Endothelial cell of umbilical vein (primary cell): ENCODE measurements at regions of chr12 and their contacts with region 1.

Region 1: GRCh38 chr12:94571556-94571955 is 78.8 kb downstream of the TMCC3 start:
- DNase-seq: peak; percentile 94
- H3K4me3 ChIP-seq: no peak overlapping the region
- H3K27ac ChIP-seq: peak overlapping the region; percentile 82
- H3K4me1 ChIP-seq: peaks cover 29% of the 10 kb centered on the region
- H3K27me3 ChIP-seq: no peaks in the 10 kb centered on the region
- CTCF ChIP-seq: no peak
- POLR2A ChIP-seq: no peak

Region 2: DNA sequence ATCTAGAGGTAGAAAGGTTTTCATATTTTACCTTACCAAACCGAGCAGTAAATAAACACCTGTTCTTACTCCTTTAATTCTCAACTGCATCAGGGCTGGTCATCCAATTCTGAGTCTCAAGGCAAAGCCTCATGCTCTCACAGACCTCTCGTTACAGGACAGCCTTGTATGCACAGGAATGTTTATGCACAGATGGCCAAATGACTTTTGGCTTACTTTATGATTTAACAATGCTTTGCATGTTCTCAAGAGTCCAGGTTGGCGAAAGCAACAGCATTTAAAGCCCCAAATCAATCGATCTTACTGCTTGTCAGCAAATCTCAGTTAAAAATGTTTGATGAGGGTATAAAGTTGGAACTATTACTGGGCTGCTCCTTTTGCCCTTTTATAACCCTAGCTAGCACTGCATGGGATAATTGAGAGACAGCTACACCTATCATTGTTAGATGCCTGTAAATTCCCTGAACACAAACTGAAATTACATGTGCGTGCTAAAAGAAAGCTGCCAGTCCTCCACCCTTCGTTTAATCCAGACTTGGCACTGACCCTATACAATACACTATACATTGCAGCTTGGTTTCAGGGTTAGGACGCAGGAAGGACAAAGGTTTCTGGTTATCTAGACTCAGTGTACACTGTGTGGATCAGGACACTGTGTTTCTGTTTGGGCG is 15.2 kb after region 1 on chr12:
- CTCF ChIA-PET with region 1: interaction called, 5 read pairs
- POLR2A ChIA-PET with region 1: no interaction called
- dilution Hi-C with region 1: no loop called
- intact Hi-C with region 1: loop called (anchors 1 kb)
- DNase-seq: peak; percentile 95
- H3K4me3 ChIP-seq: no peak overlapping the region
- H3K27ac ChIP-seq: peak overlapping the region; percentile 57
- H3K4me1 ChIP-seq: peaks cover 54% of the 10 kb centered on the region
- H3K27me3 ChIP-seq: no peaks in the 10 kb centered on the region
- CTCF ChIP-seq: no peak
- POLR2A ChIP-seq: no peak

Region 3: GRCh38 chr12:94621664-94622359 is 50.3 kb after region 1 on chr12:
- CTCF ChIA-PET with region 1: interaction called, 3 read pairs
- POLR2A ChIA-PET with region 1: no interaction called
- dilution Hi-C with region 1: no loop called
- intact Hi-C with region 1: loop called (anchors 2 kb)
- DNase-seq: peak; percentile 81
- H3K4me3 ChIP-seq: peak overlapping the region in 2 of 3 experiments; percentile 67 to 72
- H3K27ac ChIP-seq: peak overlapping the region; percentile 97
- H3K4me1 ChIP-seq: peaks cover 41% of the 10 kb centered on the region
- H3K27me3 ChIP-seq: no peaks in the 10 kb centered on the region
- CTCF ChIP-seq: no peak
- POLR2A ChIP-seq: no peak

Region 4: DNA sequence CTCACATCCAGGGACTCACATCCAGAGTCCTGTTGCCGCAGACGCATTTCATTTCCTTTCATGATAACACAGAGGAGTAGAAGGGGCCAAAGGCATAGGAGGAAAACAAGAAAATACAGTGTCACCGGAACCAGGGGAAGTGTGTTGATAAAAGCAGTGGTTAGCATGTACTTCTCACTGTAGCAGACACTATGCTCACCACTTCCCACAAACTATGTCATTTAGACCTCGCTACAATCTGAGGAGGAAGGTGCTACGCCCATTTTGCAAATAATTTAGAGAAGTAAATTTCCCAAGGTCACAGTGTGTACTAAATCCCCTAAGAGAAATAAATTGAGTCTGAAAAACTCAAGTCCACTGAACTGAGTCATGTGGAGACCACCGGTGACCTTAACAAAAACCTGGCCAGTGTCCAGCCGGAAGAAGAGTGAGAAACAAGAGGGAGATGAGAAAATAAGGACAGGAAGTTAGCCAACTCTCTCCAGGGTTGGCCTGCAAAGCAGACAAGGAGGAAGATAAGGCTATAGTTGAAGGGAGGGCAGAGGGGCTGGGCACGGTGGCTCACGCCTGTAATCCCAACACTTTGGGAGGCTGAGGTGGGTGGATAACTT is 104.6 kb after region 1 on chr12:
- CTCF ChIA-PET with region 1: no interaction called
- POLR2A ChIA-PET with region 1: interaction called, 3 read pairs
- dilution Hi-C with region 1: no loop called
- intact Hi-C with region 1: loop called (anchors 1 kb)
- DNase-seq: peak; percentile 84
- H3K4me3 ChIP-seq: no peak overlapping the region
- H3K27ac ChIP-seq: peak overlapping the region; percentile 66
- H3K4me1 ChIP-seq: peaks cover 40% of the 10 kb centered on the region
- H3K27me3 ChIP-seq: no peaks in the 10 kb centered on the region
- CTCF ChIP-seq: no peak
- POLR2A ChIP-seq: no peak

Region 5: GRCh38 chr12:94762259-94762942 is 190.8 kb after region 1 on chr12:
- CTCF ChIA-PET with region 1: interaction called, 6 read pairs
- POLR2A ChIA-PET with region 1: no interaction called
- dilution Hi-C with region 1: no loop called
- intact Hi-C with region 1: loop called (anchors 2 kb)
- DNase-seq: no peak
- H3K4me3 ChIP-seq: no peak overlapping the region
- H3K27ac ChIP-seq: peak overlapping the region; percentile 89
- H3K4me1 ChIP-seq: peaks cover 9% of the 10 kb centered on the region
- H3K27me3 ChIP-seq: no peaks in the 10 kb centered on the region
- CTCF ChIP-seq: no peak
- POLR2A ChIP-seq: no peak